ENCODE measurements at regions of chr2 and their contacts with region 1.

Region 1: DNA sequence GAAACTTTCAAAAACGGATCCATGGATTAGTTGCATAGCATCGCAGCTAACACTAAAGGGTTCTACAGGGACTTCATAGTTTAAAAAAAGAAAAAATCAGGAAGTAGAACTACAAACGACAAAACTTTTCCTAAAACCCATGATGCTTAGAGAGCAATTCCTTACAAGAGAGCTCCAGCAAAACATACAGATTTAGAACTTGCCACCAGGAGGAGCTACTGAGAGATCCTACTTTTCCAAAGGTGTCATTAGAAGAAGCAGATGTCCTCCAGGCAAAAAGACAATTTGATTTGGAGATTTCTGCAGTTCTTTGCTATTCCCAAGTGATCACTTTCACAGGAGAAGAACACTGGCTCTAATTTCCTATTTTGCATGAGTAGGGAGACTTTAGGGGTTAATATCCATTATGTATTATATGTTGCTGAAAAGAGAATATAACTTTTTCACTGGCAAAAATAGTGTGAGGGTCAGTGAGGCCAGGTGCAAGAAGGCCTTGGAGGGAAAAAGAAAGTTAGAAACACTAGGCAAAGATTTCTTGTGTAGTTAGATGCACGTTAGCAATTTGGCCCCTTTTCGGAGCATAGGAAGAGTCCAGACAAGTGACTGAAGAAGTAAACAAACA is 436.2 kb downstream of the SUCLG1 start:
- DNase-seq: no peak
- H3K4me3 Mint-ChIP-seq: no peak overlapping the region
- H3K27ac Mint-ChIP-seq: no peak overlapping the region
- H3K4me1 Mint-ChIP-seq: no peaks in the 10 kb centered on the region
- H3K27me3 Mint-ChIP-seq: no peaks in the 10 kb centered on the region

Region 2: GRCh38 chr2:83305758-83306378 is 717.1 kb before region 1 on chr2:
- intact Hi-C with region 1: no loop called
- DNase-seq: no peak
- H3K4me3 Mint-ChIP-seq: no peak overlapping the region
- H3K27ac Mint-ChIP-seq: no peak overlapping the region
- H3K4me1 Mint-ChIP-seq: no peaks in the 10 kb centered on the region
- H3K27me3 Mint-ChIP-seq: no peaks in the 10 kb centered on the region

Region 3: DNA sequence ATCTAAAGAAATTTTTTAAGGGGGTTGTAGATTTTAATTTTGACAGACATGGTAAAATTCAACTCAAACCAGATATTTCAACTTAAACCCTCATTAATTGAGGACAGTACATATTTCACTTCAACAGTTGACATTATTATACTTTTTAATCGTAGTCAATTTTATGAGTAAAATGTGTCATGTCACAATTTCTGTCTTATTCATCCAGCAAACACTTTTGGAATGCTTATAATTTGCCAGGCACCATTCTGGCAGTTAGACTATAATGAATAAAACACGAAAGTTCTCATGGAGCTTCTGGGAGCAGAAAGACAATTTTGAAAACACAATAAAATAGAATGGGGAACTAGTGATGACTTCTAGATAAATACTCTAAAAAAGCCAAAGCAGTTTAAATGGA is 658.7 kb before region 1 on chr2:
- intact Hi-C with region 1: no loop called
- DNase-seq: no peak
- H3K4me3 Mint-ChIP-seq: no peak overlapping the region
- H3K27ac Mint-ChIP-seq: no peak overlapping the region
- H3K4me1 Mint-ChIP-seq: no peaks in the 10 kb centered on the region
- H3K27me3 Mint-ChIP-seq: no peaks in the 10 kb centered on the region

Region 4: GRCh38 chr2:84302513-84303412 is 279.8 kb after region 1 on chr2:
- intact Hi-C with region 1: loop called (anchors 1 kb)
- DNase-seq: peak; percentile 21
- H3K4me3 Mint-ChIP-seq: no peak overlapping the region
- H3K27ac Mint-ChIP-seq: no peak overlapping the region
- H3K4me1 Mint-ChIP-seq: no peaks in the 10 kb centered on the region
- H3K27me3 Mint-ChIP-seq: no peaks in the 10 kb centered on the region